ENCODE measurements at regions of chr16 and their contacts with region 1.

Region 1: DNA sequence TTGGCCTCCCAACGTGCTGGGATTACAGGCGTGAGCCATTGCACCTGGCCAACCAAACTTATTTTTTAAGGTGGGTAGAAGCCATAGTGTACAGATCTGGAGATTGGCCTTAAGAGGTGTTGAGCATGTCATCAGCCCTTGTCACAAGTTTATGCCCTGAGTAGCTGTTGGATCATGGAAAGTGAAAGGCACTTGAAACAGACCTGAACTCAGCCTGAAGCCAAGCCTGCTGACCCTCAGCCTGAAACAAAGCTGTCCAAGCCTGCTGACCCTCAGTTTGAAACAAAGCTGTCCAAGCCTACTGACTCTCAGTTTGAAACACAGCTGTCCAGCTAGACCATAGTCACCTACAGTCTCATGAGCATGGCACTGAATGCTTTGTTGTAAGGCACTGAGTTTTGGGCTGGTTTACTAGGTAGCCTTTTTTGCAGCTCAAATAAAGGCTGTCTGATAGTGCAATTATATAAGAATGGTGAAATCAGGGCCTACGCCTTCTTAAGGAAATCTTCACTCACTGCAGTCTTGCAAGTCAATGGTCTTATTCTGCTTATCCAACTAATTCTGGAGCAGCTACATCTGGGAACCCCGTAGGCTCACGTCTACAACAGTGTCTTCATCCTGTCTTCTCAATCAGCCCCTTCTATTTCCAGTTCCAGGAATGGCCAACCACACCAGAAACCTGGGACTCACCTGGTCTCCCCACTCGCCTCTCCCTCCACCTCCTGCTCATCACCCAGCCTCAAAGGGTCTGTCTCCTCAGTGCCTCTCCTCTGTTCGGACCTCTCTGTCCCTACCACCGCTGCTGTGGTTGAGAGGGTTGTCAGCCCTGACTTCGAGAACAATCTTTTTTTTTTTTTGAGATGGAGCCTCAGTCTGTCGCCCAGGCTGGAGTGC is 2.9 kb upstream of the NPIPB15 start:
- DNase-seq: no peak
- H3K4me3 ChIP-seq: no peak overlapping the region
- H3K27ac ChIP-seq: no peak overlapping the region
- H3K4me1 ChIP-seq: peaks cover 0 to 9% (median 6%) of the 10 kb centered on the region in 4 donors
- H3K27me3 ChIP-seq: no peaks in the 10 kb centered on the region
- CTCF ChIP-seq: no peak
- EP300 ChIP-seq: no peak
- POLR2A ChIP-seq: no peak

Region 2: DNA sequence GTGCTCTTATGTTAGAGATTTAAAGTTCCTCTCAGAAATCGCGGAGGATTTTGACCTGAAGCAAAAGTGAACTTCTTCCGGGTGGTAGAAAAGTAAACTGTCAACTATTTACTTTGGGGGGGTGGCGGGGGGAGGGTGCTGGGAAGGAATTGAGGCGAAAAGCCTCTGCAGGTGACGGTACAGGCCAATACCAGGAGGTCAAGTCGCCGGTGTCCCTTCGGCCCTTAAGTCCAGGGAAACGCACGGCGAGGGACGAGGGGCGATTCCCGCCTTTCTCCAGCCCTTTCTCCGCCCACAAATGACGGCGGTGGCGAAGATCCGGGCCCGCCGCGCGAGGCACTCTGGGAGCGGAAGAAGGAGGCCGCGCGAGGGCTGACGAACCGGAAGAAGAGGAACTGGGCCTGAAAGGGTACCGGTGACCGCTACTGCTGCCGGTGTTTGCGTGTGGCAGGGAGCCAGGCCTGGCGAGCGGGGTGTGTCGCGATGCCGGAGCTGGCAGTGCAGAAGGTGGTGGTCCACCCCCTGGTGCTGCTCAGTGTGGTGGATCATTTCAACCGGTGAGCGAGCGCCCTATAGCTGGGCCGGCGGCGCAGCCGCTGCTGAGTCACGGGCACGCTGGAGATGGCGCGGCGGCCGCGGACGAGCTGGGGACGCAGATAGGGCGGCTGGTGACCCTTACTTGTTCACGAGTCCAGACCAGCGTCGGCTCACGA is 76.6 kb before region 1 on chr16 and contains the start of gene PSMD7:
- intact Hi-C with region 1: loop called (anchors 10 kb)
- DNase-seq: peak; percentile 97
- H3K4me3 ChIP-seq: peak within 1 kb of the TSS; percentile 66 to 94 (median 91)
- H3K27ac ChIP-seq: peak within 1 kb of the TSS; percentile 87 to 93 (median 91)
- H3K4me1 ChIP-seq: peaks cover 33 to 39% (median 35%) of the 10 kb centered on the region in 4 donors
- H3K27me3 ChIP-seq: no peaks in the 10 kb centered on the region
- CTCF ChIP-seq: no peak
- EP300 ChIP-seq: no peak
- POLR2A ChIP-seq: peak; percentile 71
- total RNA-seq, gene PSMD7: 75.6 to 94.4 (median 87.7) TPM

Measured in esophagus muscularis mucosa (tissue), 4 donors.